Psoas muscle (tissue), 8 donors: ENCODE measurements at regions of chr12 and their contacts with region 1.

Region 1: GRCh38 chr12:10190558-10191388 is 11.9 kb downstream of the TMEM52B start:
- DNase-seq: peak; percentile 46 to 61
- ATAC-seq: peak; percentile 88 to 99 (median 94)
- H3K4me3 ChIP-seq: no peak overlapping the region
- H3K27ac ChIP-seq: no peak overlapping the region
- H3K4me1 ChIP-seq: no peaks in the 10 kb centered on the region
- H3K27me3 ChIP-seq: no peaks in the 10 kb centered on the region
- CTCF ChIP-seq: peak; percentile 75

Region 2: DNA sequence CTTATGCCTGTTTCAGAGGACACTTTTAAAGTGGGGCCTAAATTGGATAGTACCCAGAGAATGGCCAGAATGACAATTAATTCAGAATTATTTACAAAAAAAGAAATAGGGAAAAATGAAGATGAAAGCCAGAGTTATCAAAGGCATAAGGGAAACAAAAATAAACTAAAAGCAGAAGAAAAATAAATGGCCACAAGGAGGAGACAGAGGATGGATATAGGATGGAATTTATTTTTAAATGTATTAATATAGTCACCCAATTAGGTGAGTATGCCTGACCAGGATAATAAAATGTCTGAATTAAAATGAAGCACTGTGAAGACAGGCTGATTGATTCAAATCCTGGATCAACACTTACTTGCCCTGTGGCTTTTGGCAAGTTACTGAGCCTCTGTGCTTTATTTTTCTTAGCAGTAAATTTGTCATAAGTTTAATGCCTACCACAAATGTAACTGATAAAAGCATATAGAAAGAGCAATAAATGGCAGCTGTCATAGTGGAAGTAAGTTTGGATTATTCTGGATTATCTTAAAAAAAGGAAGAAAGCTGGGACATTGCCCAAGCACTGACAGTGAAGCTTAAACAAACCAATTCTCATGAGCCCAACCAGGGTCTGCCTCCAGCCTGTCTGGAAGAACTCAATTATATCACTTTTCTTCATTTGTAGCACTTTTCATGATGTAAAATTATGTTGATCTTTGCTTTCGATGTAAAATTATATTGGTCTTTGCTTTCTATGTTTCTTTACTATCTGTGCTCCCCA is 156.8 kb before region 1 on chr12:
- intact Hi-C with region 1: loop called in 1 of 2 experiments (anchors 10 kb)
- DNase-seq: no peak
- ATAC-seq: no peak
- H3K4me3 ChIP-seq: no peak overlapping the region
- H3K27ac ChIP-seq: no peak overlapping the region
- H3K4me1 ChIP-seq: no peaks in the 10 kb centered on the region
- H3K27me3 ChIP-seq: no peaks in the 10 kb centered on the region
- CTCF ChIP-seq: peak; percentile 49

Region 3: GRCh38 chr12:10094646-10095395 is 96.0 kb before region 1 on chr12:
- intact Hi-C with region 1: no loop called
- DNase-seq: no peak
- ATAC-seq: no peak
- H3K4me3 ChIP-seq: peak overlapping the region; percentile 6
- H3K27ac ChIP-seq: no peak overlapping the region
- H3K4me1 ChIP-seq: no peaks in the 10 kb centered on the region
- H3K27me3 ChIP-seq: peaks cover 0 to 3% (median 1%) of the 10 kb centered on the region in 3 donors
- CTCF ChIP-seq: no peak

Region 4: DNA sequence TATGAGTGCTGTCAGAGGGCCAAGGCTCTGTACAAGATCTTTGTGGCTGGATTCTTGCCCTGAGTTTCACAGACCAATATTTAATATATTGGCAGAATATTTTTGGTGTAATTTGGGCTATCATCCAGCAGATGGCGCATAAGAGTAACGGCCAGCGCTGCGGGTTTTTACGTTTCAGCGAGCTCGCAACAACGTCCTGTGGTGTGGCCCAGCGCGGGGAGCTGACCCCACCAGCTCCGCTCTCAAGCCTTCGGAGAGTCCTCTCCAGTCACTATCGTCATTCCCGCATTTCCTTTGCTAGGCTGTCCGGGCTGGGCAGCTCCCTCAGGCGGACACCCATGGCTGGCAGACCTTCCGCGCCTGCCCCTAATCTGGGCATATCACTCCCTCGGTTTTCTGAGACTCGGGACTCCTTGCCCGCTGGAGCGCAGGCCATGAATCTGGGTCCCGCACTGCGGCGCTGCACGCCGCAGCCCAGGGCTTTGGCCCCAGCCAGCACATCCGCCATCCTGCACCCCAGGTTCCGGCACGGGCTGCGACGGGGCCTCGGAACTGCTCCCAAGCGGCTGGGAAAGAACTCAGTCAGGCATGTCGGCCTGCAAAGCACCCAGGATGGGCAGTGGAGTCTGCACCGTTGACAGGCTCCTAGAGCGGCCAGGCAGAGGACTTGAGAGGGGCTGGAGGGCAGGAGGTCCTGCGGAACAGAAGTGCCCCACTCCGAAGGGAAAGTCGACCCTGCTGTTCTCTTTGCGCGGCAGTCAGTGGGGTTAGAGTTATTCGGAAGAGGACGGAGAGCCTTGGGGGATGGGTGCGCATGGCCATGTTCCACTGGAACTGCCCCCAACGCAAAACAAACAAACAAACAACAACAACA is 37.3 kb before region 1 on chr12:
- intact Hi-C with region 1: loop called (anchors 1 to 2 kb)
- DNase-seq: peak; percentile 60 to 83
- ATAC-seq: peak; percentile 94 to 96 (median 94)
- H3K4me3 ChIP-seq: peak overlapping the region; percentile 67
- H3K27ac ChIP-seq: peak overlapping the region; percentile 70
- H3K4me1 ChIP-seq: no peaks in the 10 kb centered on the region
- H3K27me3 ChIP-seq: no peaks in the 10 kb centered on the region
- CTCF ChIP-seq: peak; percentile 78

Region 5: DNA sequence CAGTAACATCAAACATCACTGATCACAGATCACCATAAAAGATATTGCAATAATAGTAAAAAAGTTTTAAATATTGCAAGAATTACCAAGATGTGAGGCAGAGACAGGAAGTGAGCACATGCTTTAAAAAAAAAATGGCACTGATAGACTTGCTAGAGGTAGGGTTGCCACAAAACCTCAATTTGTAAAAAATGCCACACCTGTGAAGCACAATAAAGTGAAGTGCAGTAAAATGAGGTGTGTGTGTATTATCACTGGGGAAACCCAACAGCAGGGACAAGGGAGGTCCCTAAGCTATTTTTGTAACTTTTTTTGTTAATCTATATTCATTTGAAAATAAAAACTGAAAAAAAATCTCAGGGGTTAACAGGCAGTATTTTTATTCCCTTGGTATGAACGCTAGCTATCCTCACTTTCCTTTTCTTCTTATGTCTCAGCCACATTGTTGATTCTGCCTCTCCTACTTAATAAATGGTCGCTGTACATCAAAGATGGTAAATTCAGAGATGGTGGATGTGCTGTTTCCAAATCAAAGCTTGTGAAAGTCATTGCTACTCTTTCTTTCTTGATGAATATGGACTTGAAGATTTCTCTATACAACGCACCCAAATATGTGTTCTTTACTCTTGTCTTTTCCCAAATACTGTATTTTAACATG is 102.9 kb after region 1 on chr12:
- intact Hi-C with region 1: no loop called
- DNase-seq: no peak
- ATAC-seq: no peak
- H3K4me3 ChIP-seq: no peak overlapping the region
- H3K27ac ChIP-seq: no peak overlapping the region
- H3K4me1 ChIP-seq: no peaks in the 10 kb centered on the region
- H3K27me3 ChIP-seq: no peaks in the 10 kb centered on the region
- CTCF ChIP-seq: no peak